A673 (cell line): ENCODE measurements at regions of chr14 and their contacts with region 1.

Region 1: GRCh38 chr14:54509546-54510501 is at the start of gene CGRRF1:
- DNase-seq: peak; percentile 98
- H3K4me3 ChIP-seq: peak within 1 kb of the TSS; percentile 86
- H3K27ac ChIP-seq: peak within 1 kb of the TSS; percentile 49
- H3K4me1 ChIP-seq: peaks cover 6% of the 10 kb centered on the region
- H3K27me3 ChIP-seq: no peaks in the 10 kb centered on the region
- CTCF ChIP-seq: peak; percentile 56
- total RNA-seq, gene CGRRF1: 11.2 and 15.6 TPM in 2 replicates

Region 2: GRCh38 chr14:54374117-54374884 is 135.5 kb before region 1 on chr14:
- CTCF ChIA-PET with region 1: interaction called, 12 read pairs
- POLR2A ChIA-PET with region 1: no interaction called
- intact Hi-C with region 1: no loop called
- DNase-seq: no peak
- H3K4me3 ChIP-seq: no peak overlapping the region
- H3K27ac ChIP-seq: no peak overlapping the region
- H3K4me1 ChIP-seq: no peaks in the 10 kb centered on the region
- H3K27me3 ChIP-seq: no peaks in the 10 kb centered on the region
- CTCF ChIP-seq: no peak

Region 3: GRCh38 chr14:54698966-54699530 is 189.2 kb after region 1 on chr14:
- CTCF ChIA-PET with region 1: no interaction called
- POLR2A ChIA-PET with region 1: interaction called, 10 read pairs
- intact Hi-C with region 1: no loop called
- DNase-seq: no peak
- H3K4me3 ChIP-seq: no peak overlapping the region
- H3K27ac ChIP-seq: no peak overlapping the region
- H3K4me1 ChIP-seq: peaks cover 10% of the 10 kb centered on the region
- H3K27me3 ChIP-seq: no peaks in the 10 kb centered on the region
- CTCF ChIP-seq: no peak

Region 4: DNA sequence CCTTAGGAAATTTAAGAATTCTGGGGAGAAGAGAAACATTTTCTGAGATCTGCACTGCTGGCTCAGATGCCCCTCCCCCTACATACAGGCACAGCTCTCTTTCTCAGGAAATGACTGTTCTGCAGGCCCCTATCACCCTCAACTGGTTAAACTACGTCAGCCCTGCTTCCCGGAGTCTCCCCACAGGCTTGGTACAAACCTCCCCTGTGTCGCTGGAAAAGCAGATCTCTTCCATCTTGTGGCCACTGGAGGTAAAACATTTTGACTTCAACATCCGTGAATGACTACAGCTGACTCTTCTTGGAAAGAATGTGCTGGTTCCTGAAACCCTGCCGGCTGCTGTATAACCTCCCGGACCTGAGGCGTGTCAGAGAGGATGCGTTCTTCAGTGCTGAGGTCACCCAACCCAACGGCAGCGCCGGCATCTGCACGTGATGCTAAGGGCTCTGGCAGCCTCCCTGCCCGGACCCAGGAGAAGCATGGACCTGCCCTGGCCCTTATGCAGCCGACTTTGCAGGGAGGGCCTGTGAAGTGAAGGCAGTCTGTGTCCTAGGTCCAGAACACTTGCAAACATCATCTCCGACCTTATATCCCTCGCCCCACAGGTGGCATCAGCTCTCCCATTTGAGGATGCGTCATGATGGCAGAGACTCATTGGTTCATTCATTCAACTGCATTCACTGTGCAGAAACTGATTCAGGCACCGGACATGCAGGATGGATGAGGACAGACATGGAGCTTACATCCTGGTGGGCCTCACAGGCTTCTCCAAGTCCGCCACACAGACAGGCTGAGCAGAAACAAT is 263.5 kb after region 1 on chr14:
- CTCF ChIA-PET with region 1: interaction called, 10 read pairs
- POLR2A ChIA-PET with region 1: no interaction called
- intact Hi-C with region 1: no loop called
- DNase-seq: peak; percentile 97
- H3K4me3 ChIP-seq: no peak overlapping the region
- H3K27ac ChIP-seq: peak overlapping the region; percentile 70
- H3K4me1 ChIP-seq: peaks cover 27% of the 10 kb centered on the region
- H3K27me3 ChIP-seq: no peaks in the 10 kb centered on the region
- CTCF ChIP-seq: peak; percentile 64

Region 5: DNA sequence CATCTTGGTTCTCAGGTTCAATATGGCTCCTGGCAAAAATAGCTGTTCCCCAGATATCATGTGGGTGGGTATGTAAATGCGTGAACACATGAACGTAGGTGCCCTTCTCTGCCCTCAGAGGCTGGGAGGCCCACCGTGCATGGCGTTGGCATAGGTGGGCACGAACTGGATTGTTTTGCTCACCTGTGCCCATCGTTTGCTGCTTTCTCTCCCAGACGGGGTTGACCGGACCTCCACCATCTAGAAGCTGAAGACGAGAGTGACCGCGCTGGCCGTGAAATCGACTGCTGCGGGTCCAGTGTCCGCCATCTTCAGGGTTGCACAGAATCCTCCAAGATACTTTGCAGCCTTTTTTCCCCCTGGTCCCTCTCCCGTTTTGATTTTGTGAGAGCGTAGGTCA is 278.9 kb after region 1 on chr14:
- CTCF ChIA-PET with region 1: interaction called, 11 read pairs
- POLR2A ChIA-PET with region 1: no interaction called
- intact Hi-C with region 1: no loop called
- DNase-seq: no peak
- H3K4me3 ChIP-seq: no peak overlapping the region
- H3K27ac ChIP-seq: no peak overlapping the region
- H3K4me1 ChIP-seq: peaks cover 26% of the 10 kb centered on the region
- H3K27me3 ChIP-seq: no peaks in the 10 kb centered on the region
- CTCF ChIP-seq: no peak